ENCODE measurements at regions of chr1 and their contacts with region 1.

Region 1: DNA sequence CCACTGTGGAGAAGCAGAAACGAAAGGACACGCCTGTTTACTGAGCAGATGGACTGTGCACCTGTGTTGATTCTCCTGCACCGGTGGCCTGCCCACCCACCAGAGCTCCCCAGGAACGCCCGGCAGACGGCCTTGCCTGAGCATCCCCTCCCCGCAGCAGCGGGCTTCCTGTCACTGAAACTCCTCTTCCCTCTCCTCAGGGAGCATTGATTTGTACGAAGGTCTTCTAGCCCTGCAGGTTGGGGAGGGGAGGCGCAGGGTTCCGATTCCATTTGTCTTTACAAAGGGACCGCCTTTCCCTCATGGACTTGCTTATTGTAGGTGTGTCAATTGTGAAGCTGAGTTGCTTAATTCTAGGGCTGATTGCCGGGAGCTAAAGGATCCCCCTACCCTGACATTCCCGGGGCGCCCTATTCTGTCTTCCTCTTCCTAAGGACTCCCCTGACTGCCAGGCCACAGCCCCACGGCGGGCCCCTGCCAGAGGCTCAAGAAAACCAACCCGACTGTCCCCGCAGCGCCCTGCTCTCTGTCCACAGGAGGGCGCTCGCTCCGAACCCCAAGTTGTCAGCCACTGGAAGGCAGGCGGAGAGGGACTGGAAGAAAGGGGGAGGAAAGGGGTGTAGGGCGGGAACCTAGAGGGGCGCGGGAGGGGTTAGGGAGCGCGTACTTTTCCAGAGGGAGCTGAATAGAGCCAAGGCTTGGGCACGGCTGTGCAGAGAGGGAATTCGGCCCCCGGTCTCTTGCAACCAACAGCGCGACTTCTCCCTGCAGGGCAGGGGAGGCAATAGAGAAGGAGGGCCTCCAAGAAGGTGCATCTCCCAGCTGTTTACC is 2.8 kb downstream of the S100A6 start:
- DNase-seq: peak; percentile 83 to 91 (median 84)
- ATAC-seq: peak; percentile 35 to 70 (median 52)
- H3K4me3 ChIP-seq: peak overlapping the region in 10 of 12 donors; percentile 14 to 97 (median 90)
- H3K27ac ChIP-seq: peak overlapping the region in 11 of 12 donors; percentile 3 to 100 (median 98)
- H3K4me1 ChIP-seq: peaks cover 0 to 54% (median 28%) of the 10 kb centered on the region in 12 donors
- H3K27me3 ChIP-seq: no peaks in the 10 kb centered on the region
- CTCF ChIP-seq: peak; percentile 63 to 89 (median 80)
- POLR2A ChIP-seq: no peak

Region 2: DNA sequence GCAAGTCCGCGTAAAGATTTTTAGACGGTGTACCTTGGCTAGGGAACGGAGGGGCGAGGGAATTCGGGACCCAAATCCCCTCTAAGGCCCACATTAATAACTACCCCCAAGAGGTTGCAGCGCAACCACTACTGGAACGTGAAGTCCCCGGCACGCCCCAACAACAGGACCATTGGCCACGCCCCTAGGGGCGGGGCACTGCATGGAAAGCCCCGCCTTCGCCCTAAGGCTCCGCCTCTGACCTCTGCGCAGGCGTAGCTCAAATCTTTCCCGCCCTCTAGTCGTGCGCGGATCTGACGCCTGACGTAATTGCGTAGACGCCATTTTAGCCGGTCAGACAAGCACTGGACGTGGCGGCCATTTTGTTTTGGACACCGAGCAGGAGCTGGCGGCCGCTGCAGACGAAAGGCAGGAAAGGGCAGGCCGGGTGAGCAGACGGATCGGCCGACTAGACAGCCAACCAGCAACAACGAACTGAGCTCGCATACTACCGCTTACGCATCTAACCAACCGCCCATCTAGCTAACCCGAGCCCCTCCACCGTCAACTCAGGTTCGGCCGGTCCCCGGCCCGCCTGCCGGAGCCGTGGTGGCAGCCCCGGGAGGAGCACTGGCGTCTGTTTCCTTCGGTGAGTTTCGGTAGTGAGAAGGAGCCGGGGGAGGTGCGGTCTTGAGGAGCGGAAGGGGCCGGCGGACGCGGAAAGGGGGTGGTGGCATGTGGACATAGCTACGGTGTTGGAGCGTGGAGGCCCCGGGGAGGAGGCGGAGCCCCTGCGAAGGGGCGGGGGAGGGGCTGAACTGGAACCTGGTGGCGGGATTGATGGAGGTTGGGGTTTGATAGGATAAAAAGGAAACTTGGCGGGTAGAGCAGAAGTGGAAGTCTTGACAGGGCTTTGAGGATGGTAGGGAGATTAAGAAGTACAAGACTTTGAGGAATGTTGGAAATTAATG is 101.0 kb after region 1 on chr1 and contains the start of gene CHTOP:
- intact Hi-C with region 1: loop called in 1 of 10 experiments (anchors 5 kb)
- DNase-seq: peak; percentile 97 to 98 (median 98)
- ATAC-seq: peak; percentile 90 to 94 (median 93)
- H3K4me3 ChIP-seq: peak within 1 kb of the TSS; percentile 64 to 99 (median 82)
- H3K27ac ChIP-seq: peak within 1 kb of the TSS; percentile 99 to 100 (median 100)
- H3K4me1 ChIP-seq: peaks cover 4 to 82% (median 51%) of the 10 kb centered on the region in 12 donors
- H3K27me3 ChIP-seq: no peaks in the 10 kb centered on the region
- CTCF ChIP-seq: no peak
- POLR2A ChIP-seq: peak; percentile 56 to 95
- total RNA-seq, gene CHTOP: 48.4 to 92.0 (median 67.7) TPM

Measured in heart left ventricle (tissue), 16 donors.